ENCODE measurements at regions of chr5 and their contacts with region 1.

Region 1: GRCh38 chr5:91383027-91383955 is at the start of gene ARRDC3:
- DNase-seq: peak; percentile 95
- H3K4me3 Mint-ChIP-seq: peak within 1 kb of the TSS; percentile 97
- H3K27ac Mint-ChIP-seq: peak within 1 kb of the TSS; percentile 97
- H3K4me1 Mint-ChIP-seq: peaks cover 15% of the 10 kb centered on the region
- H3K27me3 Mint-ChIP-seq: no peaks in the 10 kb centered on the region
- total RNA-seq, gene ARRDC3: 12.8 to 13.8 TPM

Region 2: GRCh38 chr5:90474235-90475109 is 908.8 kb before region 1 on chr5 and contains the starts of genes MBLAC2 and POLR3G:
- CTCF ChIA-PET with region 1: no interaction called
- intact Hi-C with region 1: loop called (anchors 1 kb)
- DNase-seq: peak; percentile 96
- H3K4me3 Mint-ChIP-seq: peak within 1 kb of the TSS; percentile 92
- H3K27ac Mint-ChIP-seq: peak within 1 kb of the TSS; percentile 85
- H3K4me1 Mint-ChIP-seq: peaks cover 33% of the 10 kb centered on the region
- H3K27me3 Mint-ChIP-seq: no peaks in the 10 kb centered on the region
- total RNA-seq, gene MBLAC2: 2.4 to 2.8 TPM
- total RNA-seq, gene POLR3G: 10.1 to 13.6 TPM

Region 3: DNA sequence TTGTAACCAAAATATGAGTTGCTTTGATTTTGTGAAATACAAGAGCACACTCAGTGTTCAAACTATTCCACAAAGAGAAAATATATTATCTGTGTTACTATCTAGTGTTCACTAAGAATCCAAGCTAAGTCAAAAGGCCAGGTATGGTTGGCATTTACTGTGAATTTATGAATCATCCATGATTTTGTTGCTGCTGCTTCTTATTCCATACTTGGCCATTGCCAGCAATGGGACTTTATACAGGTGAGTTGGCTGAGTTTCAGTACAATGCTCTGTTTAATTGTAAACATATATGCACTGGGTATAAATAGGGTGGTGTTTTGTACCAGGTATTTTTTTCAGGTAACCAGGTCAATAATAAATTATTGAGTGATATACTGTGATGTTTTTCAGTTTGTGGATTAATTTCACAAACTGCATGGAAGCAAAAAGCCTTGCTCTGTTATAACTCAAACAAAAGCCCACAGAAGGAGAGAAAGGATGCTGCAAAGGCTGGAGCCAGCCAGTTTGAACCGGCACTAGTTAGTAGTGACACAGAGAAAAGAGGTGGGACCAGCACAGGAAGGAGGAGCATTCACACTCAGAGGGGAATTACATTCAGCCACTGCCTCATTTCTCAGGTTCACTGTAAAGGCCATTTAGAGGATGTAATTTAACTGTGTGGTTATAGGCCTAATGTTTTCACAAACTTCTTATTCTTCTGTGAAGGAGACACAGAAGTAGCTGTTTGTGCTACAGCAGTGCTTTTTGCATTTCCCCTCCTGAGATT is 442.9 kb before region 1 on chr5:
- CTCF ChIA-PET with region 1: interaction called, 6 read pairs
- intact Hi-C with region 1: loop called (anchors 1 kb)
- DNase-seq: peak; percentile 88
- H3K4me3 Mint-ChIP-seq: no peak overlapping the region
- H3K27ac Mint-ChIP-seq: peak overlapping the region; percentile 73
- H3K4me1 Mint-ChIP-seq: peaks cover 13% of the 10 kb centered on the region
- H3K27me3 Mint-ChIP-seq: no peaks in the 10 kb centered on the region

Region 4: GRCh38 chr5:91162534-91163381 is 220.5 kb before region 1 on chr5:
- CTCF ChIA-PET with region 1: no interaction called
- intact Hi-C with region 1: loop called (anchors 1 kb)
- DNase-seq: peak; percentile 89
- H3K4me3 Mint-ChIP-seq: no peak overlapping the region
- H3K27ac Mint-ChIP-seq: peak overlapping the region; percentile 65
- H3K4me1 Mint-ChIP-seq: peaks cover 22% of the 10 kb centered on the region
- H3K27me3 Mint-ChIP-seq: no peaks in the 10 kb centered on the region

Region 5: DNA sequence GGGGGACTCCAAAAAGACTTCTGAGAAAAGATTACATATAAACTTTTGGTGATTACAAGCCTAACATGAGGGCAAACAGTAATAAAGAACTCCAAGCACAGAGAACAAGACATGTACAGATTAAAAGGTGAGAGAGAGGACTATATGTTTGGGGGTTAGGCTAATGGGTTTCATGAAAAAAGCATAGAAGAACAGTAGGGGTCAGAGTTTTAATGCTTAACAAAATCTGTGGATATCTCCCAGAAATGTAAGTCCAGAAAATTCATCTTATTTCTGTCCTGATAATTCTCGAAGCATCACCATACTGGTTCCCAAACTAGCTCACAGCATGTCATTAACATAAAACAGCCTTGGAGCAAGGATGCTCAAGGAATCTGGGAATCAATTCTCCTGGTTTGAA is 137.4 kb before region 1 on chr5:
- CTCF ChIA-PET with region 1: interaction called, 7 read pairs
- intact Hi-C with region 1: loop called (anchors 1 kb)
- DNase-seq: no peak
- H3K4me3 Mint-ChIP-seq: no peak overlapping the region
- H3K27ac Mint-ChIP-seq: no peak overlapping the region
- H3K4me1 Mint-ChIP-seq: no peaks in the 10 kb centered on the region
- H3K27me3 Mint-ChIP-seq: no peaks in the 10 kb centered on the region

Region 6: GRCh38 chr5:91311697-91312501 is 71.4 kb before region 1 on chr5:
- CTCF ChIA-PET with region 1: interaction called, 22 read pairs
- intact Hi-C with region 1: loop called (anchors 1 kb)
- DNase-seq: peak; percentile 75
- H3K4me3 Mint-ChIP-seq: peak overlapping the region; percentile 48
- H3K27ac Mint-ChIP-seq: peak overlapping the region; percentile 68
- H3K4me1 Mint-ChIP-seq: peaks cover 52% of the 10 kb centered on the region
- H3K27me3 Mint-ChIP-seq: no peaks in the 10 kb centered on the region

Region 7: DNA sequence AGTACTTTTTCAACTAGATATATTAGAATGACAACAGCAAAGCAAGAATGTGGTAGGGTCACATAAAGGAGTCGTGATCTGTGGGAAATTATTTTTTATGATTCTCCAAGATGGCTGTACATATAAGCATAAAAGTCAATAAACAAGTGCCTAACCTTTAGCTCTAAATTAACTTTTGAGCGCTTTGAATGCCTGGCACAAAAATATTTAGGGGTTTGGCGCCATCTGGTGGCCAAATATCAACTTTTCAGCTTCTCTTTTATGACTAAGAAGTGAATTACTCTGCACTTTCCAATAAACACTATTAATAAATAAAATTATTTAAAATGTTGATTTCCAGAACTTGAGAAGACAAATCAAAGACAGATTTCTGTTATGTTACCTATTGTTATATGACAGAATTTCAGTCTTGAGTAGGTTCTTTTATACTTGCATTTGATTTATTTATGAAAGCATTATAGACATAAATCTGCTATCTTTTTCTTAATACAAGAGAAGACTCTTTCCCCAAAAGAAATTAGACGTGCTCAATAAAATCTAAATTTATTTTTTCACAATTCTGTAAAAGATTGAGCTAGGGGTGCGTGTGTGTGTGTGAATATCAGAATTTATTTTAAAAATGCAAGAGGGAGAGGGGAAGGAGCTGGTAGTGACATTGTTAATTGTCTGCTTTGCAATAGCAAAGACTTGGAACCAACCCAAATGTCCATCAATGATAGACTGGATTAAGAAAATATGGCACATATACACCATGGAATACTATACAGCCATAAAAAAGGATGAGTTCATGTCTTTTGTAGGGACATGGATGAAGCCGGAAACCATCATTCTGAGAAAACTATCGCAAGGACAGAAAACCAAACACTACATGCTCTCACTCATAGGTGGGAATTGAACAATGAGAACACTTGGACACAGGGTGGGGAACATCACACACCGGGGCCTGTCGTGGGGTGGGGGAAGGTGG is 36.6 kb after region 1 on chr5:
- CTCF ChIA-PET with region 1: interaction called, 106 read pairs
- intact Hi-C with region 1: loop called (anchors 1 kb)
- DNase-seq: peak; percentile 83
- H3K4me3 Mint-ChIP-seq: no peak overlapping the region
- H3K27ac Mint-ChIP-seq: no peak overlapping the region
- H3K4me1 Mint-ChIP-seq: peaks cover 8% of the 10 kb centered on the region
- H3K27me3 Mint-ChIP-seq: no peaks in the 10 kb centered on the region